Stomach (tissue), 19 donors: ENCODE measurements at regions of chr11 and their contacts with region 1.

Region 1: DNA sequence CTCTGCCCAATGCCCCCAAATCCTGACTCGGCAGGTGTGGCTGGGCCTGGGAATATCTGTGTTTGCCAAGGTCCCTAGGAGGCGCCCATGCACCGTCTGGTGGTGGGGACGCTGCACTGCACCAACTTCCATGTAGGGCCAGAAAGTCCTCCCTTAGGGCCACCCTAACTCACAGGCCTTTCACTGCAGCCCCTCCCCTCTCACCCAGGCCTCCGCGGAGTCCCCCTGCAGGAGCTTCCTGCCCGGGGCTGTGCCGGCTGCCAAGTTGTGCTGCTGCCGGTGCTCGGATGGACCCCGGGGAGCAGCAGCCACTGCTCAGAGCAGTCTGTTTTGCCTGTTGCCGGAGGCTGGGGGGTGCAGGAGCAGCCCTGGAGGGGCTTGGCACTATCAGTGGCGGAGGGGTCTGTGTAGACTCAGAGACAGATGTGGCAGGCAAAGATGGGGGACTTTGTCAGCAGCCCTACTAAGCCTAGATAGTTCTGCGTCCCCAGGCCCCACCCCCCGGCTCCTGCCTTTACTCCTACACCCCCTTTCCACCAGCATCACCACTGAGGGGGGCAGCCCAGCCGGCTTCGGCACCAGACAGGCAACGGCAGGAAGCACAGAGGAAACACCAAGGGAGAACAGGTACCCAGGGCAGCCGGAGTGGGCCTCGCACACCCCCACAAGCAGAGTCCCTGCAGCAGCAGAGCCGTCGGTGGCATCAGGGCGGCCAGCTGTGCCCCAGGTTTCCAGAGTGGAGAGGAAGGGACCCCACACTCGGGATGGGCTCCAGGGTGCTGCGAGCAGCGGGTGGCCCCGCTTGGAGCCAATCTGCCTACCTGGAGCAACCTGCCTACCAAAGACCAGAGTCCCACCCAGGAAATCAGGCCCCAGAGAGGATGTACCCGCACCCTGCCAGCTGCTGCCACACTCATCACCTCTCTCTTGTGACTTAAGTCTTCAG is 124.3 kb downstream of the TRIM29 start:
- DNase-seq: peak; percentile 73 to 85
- H3K4me3 ChIP-seq: no peak overlapping the region
- H3K27ac ChIP-seq: no peak overlapping the region
- H3K4me1 ChIP-seq: peaks cover 0 to 5% (median 1%) of the 10 kb centered on the region in 4 donors
- H3K27me3 ChIP-seq: peaks cover 0 to 84% (median 8%) of the 10 kb centered on the region in 3 donors
- CTCF ChIP-seq: peak in 5 of 7 experiments; percentile 64 to 84 (median 75)
- EP300 ChIP-seq: no peak
- POLR2A ChIP-seq: no peak

Region 2: DNA sequence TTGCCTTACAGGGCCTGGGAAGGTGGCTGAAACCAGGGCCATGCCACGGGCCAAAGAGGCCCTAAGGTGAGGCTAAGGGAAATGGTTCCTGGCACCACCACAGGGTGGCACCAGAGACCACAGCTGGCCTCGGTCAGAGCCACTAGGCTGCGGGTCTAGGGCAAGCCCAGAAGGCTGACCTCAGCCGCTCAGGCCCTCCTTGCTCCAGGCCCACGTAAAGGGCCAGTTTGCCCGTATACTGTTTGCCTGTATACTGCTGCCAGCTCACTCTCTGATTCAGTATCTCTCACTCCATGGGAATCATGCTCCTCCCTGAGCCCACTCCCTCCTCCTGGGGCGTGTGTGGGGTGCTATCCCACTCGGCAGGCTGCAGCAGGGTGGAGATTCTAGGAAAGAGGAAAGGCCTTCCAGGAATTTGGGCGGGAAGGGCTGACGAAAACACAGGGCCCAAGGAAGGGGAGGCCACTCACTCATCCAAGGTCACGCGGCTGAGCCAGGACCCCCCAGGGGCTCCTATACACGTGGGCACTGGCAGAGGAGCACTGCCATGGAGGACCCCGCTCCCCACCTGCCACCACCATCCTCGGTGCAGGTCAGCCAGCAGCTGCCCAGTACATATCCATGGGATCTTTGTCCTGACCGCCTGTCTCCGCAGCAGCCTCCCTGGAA is 347.0 kb before region 1 on chr11:
- intact Hi-C with region 1: loop called (anchors 10 kb)
- DNase-seq: peak; percentile 84 to 89
- H3K4me3 ChIP-seq: no peak overlapping the region
- H3K27ac ChIP-seq: no peak overlapping the region
- H3K4me1 ChIP-seq: peaks cover 8 to 30% (median 23%) of the 10 kb centered on the region in 4 donors
- H3K27me3 ChIP-seq: no peaks in the 10 kb centered on the region
- CTCF ChIP-seq: peak in 6 of 7 experiments; percentile 5 to 96 (median 92)
- EP300 ChIP-seq: no peak
- POLR2A ChIP-seq: no peak

Region 3: GRCh38 chr11:119797123-119797611 is 216.4 kb before region 1 on chr11:
- intact Hi-C with region 1: no loop called
- DNase-seq: peak in 1 of 2 donors; percentile 38
- H3K4me3 ChIP-seq: no peak overlapping the region
- H3K27ac ChIP-seq: no peak overlapping the region
- H3K4me1 ChIP-seq: no peaks in the 10 kb centered on the region
- H3K27me3 ChIP-seq: peaks cover 0 to 15% (median 0%) of the 10 kb centered on the region in 3 donors
- CTCF ChIP-seq: no peak
- EP300 ChIP-seq: no peak
- POLR2A ChIP-seq: no peak